WTC11 (cell line): ENCODE measurements at regions of chr20 and their contacts with region 1.

Region 1: DNA sequence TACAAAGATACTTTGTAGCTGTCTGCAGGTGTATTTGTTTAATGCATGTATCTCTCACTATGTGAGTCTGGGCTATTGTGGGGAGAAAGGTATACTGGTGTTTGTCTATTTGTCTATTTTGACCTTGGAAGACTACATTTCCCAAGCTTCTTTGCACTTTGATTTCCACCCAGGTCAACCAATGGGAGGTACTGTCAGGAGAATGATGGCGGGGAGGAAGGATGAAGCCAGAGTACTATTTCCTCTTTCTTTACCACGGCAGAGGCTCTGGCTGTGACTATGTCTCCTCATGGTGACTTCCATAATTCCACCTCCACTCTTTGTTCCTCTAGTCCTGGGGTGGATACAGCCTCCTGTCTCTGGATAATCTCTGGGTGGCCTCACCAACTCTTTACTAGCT is 23.1 kb downstream of the LBP start:
- DNase-seq: no peak
- ATAC-seq: peak; percentile 96
- H3K4me3 Mint-ChIP-seq: peak overlapping the region; percentile 16; the same call in 1 of the 2 replicates
- H3K27ac Mint-ChIP-seq: peak overlapping the region; percentile 64; the same call in 1 of the 2 replicates
- H3K4me1 Mint-ChIP-seq: peaks cover 3% of the 10 kb centered on the region; the same call in 1 of the 2 replicates
- H3K27me3 Mint-ChIP-seq: no peaks in the 10 kb centered on the region
- CTCF ChIP-seq: no peak

Region 2: DNA sequence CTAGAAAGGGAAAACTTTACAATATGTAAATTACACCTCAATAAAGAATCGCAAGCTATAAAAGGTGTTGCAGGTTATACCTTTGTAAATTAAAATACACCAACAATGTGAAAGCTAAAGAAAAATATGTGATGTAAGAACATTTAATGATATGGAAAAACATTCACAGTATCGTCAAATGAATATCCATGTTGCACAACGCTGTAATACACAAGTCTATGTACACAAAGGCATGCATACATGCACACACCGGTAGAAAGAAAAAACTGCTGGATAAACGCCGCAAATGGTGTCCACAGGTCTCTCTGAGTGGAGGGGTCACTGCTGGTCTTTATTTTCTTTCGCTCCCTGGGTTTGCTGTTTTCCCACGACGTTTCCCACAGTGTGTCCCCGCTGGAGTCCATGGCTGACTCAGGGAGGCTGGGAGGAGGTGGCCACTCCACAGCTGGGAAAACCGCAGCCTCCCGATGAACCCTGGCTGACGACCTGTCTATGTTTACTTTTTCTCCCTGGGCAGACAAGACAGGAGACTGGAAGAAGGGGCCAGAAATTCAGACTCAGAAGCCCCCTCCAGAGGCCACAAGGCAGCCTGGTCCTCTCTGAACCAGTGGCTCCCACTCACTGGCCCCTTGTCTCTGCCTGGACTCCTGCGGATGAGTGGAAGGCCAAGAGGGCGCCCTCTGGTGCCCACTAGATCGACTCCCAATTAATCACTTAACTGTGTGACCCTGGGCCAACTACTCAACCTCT is 78.4 kb before region 1 on chr20:
- CTCF ChIA-PET with region 1: no interaction called
- POLR2A ChIA-PET with region 1: no interaction called
- DNase-seq: peak; percentile 74
- ATAC-seq: peak; percentile 97
- H3K4me3 Mint-ChIP-seq: no peak overlapping the region
- H3K27ac Mint-ChIP-seq: 0 out of 2 replicates have a peak overlapping the region, but pooled peaks have one; percentile 75
- H3K4me1 Mint-ChIP-seq: peaks cover 24% of the 10 kb centered on the region
- H3K27me3 Mint-ChIP-seq: no peaks in the 10 kb centered on the region
- CTCF ChIP-seq: peak; percentile 38; the same call in 1 of the 2 replicates

Region 3: GRCh38 chr20:38412877-38413577 is 43.6 kb after region 1 on chr20:
- CTCF ChIA-PET with region 1: interaction called, 16 read pairs
- POLR2A ChIA-PET with region 1: no interaction called
- DNase-seq: peak; percentile 4
- ATAC-seq: no peak
- H3K4me3 Mint-ChIP-seq: no peak overlapping the region
- H3K27ac Mint-ChIP-seq: no peak overlapping the region
- H3K4me1 Mint-ChIP-seq: peaks cover 20% of the 10 kb centered on the region
- H3K27me3 Mint-ChIP-seq: no peaks in the 10 kb centered on the region
- CTCF ChIP-seq: no peak